T-cell (primary cell): ENCODE measurements at regions of chr21 and their contacts with region 1.

Region 1: DNA sequence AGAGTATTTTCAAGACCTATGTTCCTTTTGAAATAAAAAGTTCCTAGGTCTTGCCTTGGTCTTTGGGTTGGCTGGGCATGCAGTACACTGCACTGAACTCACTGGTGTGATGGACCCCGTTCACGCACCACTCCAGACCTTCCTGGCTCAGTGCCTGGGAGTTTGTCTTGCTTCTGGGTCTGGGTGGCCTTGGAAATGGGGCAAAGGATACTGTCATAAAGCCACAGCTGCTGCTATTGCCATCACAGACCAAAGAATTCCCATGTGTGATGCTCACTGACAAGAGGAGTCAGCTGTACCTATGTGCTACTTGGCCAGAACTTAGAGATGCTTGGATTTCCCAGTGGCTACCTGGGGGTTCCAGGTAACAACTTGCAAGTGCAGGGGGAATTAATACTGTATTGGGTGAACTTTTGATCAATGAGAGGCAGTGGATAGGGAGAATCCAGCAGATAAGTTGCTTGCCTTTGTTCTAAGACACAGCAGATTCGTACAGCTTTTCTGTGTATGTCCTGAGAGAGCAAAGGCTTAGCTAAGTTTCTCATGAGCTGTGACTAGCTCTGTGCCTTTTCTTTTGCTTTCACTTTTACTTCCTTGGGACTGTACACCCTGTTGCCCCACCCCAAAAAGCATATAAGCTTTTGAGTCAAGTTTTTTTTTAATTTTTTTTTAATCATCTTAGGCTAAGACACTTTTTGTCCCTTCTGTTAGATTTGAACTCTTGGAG is 115.3 kb downstream of the RUNX1 start:
- DNase-seq: peak in 27 of 35 experiments; percentile 6 to 79 (median 24)
- ATAC-seq: peak; percentile 86 to 91 (median 89)
- H3K4me3 ChIP-seq: peak overlapping the region in 1 of 2 donors; percentile 30
- H3K4me3 Mint-ChIP-seq: peak overlapping the region; percentile 75 to 77 (median 77)
- H3K27ac ChIP-seq: peak overlapping the region; percentile 94
- H3K27ac Mint-ChIP-seq: peak overlapping the region; percentile 93 to 99
- H3K4me1 ChIP-seq: peaks cover 47 to 60% of the 10 kb centered on the region in 2 experiments
- H3K4me1 Mint-ChIP-seq: peaks cover 83 to 89% (median 86%) of the 10 kb centered on the region in 3 donors
- H3K27me3 ChIP-seq: no peaks in the 10 kb centered on the region
- H3K27me3 Mint-ChIP-seq: no peaks in the 10 kb centered on the region

Region 2: GRCh38 chr21:33157303-33157702 is 1776.5 kb before region 1 on chr21:
- CTCF ChIA-PET with region 1: no interaction called
- POLR2A ChIA-PET with region 1: no interaction called
- DNase-seq: no peak
- ATAC-seq: no peak
- H3K4me3 ChIP-seq: no peak overlapping the region
- H3K4me3 Mint-ChIP-seq: no peak overlapping the region
- H3K27ac ChIP-seq: no peak overlapping the region
- H3K27ac Mint-ChIP-seq: no peak overlapping the region
- H3K4me1 ChIP-seq: peaks cover 0 to 1% of the 10 kb centered on the region in 2 experiments
- H3K4me1 Mint-ChIP-seq: peaks cover 0 to 6% (median under 1%) of the 10 kb centered on the region in 3 donors
- H3K27me3 ChIP-seq: peaks cover 0 to 23% of the 10 kb centered on the region in 2 experiments
- H3K27me3 Mint-ChIP-seq: peaks cover 34 to 58% of the 10 kb centered on the region in 2 donors

Region 3: GRCh38 chr21:34888569-34889319 is 45.0 kb before region 1 on chr21:
- CTCF ChIA-PET with region 1: interaction called in 1 of 2 experiments, 14 read pairs
- POLR2A ChIA-PET with region 1: interaction called, 3 to 6 read pairs
- DNase-seq: peak; percentile 29 to 83 (median 54)
- ATAC-seq: peak; percentile 44 to 55 (median 50)
- H3K4me3 ChIP-seq: peak overlapping the region; percentile 48 to 73
- H3K4me3 Mint-ChIP-seq: peak overlapping the region; percentile 89 to 98 (median 96)
- H3K27ac ChIP-seq: peak overlapping the region; percentile 72
- H3K27ac Mint-ChIP-seq: peak overlapping the region; percentile 96 to 98
- H3K4me1 ChIP-seq: peaks cover 47 to 52% of the 10 kb centered on the region in 2 experiments
- H3K4me1 Mint-ChIP-seq: peaks cover 54 to 66% (median 59%) of the 10 kb centered on the region in 3 donors
- H3K27me3 ChIP-seq: no peaks in the 10 kb centered on the region
- H3K27me3 Mint-ChIP-seq: no peaks in the 10 kb centered on the region

Region 4: GRCh38 chr21:35204850-35205541 is 271.2 kb after region 1 on chr21:
- CTCF ChIA-PET with region 1: no interaction called
- POLR2A ChIA-PET with region 1: interaction called in 1 of 2 experiments, 10 read pairs
- DNase-seq: peak in 2 of 35 experiments; percentile 6 to 20
- ATAC-seq: peak in 3 of 4 experiments; percentile 19 to 47 (median 40)
- H3K4me3 ChIP-seq: peak overlapping the region; percentile 19 to 71
- H3K4me3 Mint-ChIP-seq: peak overlapping the region; percentile 76 to 83 (median 82)
- H3K27ac ChIP-seq: no peak overlapping the region
- H3K27ac Mint-ChIP-seq: peak overlapping the region in 1 of 2 donors; percentile 61
- H3K4me1 ChIP-seq: peaks cover 12 to 13% of the 10 kb centered on the region in 2 experiments
- H3K4me1 Mint-ChIP-seq: peaks cover 17 to 25% (median 22%) of the 10 kb centered on the region in 3 donors
- H3K27me3 ChIP-seq: peaks cover 0 to 17% of the 10 kb centered on the region in 2 experiments
- H3K27me3 Mint-ChIP-seq: no peaks in the 10 kb centered on the region

Region 5: DNA sequence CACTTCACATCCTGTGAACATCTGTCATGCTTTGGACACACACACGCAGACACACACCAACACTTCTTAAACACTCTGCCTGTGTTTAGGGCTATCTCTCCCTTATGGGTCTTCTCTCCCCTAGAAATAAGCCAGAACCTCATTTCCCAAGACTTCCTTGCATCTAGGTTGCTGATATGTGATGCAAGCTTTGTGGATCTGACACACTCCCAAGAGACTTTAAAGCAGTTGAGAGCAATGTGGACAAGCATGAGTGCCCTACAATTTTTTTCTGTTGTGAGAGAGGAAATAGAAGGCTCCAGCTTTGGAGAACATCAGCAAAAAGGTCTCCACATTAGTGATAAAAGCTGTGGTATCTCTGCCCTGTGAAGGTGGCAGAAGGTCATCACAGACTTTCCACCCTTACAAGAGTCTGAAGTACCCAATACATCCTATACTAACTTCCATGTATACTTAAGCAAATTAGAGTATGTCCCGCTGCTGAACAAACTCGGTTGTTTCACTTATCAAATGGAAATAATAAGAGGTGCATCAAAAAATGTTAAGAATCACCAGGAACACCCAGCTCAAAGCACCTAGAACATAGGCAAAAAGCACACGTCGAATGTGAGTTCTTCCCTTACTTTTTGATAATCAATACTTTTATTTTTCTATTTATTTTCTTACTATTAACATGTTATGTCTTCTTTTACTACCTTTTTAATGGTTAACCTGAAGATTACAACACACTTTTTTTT is 859.0 kb after region 1 on chr21:
- CTCF ChIA-PET with region 1: no interaction called
- POLR2A ChIA-PET with region 1: interaction called in 1 of 2 experiments, 17 read pairs
- DNase-seq: no peak
- ATAC-seq: no peak
- H3K4me3 ChIP-seq: no peak overlapping the region
- H3K4me3 Mint-ChIP-seq: no peak overlapping the region
- H3K27ac ChIP-seq: no peak overlapping the region
- H3K27ac Mint-ChIP-seq: no peak overlapping the region
- H3K4me1 ChIP-seq: no peaks in the 10 kb centered on the region
- H3K4me1 Mint-ChIP-seq: no peaks in the 10 kb centered on the region
- H3K27me3 ChIP-seq: no peaks in the 10 kb centered on the region
- H3K27me3 Mint-ChIP-seq: peaks cover 4 to 7% of the 10 kb centered on the region in 2 donors